ENCODE measurements at regions of chr12 and their contacts with region 1.

Region 1: DNA sequence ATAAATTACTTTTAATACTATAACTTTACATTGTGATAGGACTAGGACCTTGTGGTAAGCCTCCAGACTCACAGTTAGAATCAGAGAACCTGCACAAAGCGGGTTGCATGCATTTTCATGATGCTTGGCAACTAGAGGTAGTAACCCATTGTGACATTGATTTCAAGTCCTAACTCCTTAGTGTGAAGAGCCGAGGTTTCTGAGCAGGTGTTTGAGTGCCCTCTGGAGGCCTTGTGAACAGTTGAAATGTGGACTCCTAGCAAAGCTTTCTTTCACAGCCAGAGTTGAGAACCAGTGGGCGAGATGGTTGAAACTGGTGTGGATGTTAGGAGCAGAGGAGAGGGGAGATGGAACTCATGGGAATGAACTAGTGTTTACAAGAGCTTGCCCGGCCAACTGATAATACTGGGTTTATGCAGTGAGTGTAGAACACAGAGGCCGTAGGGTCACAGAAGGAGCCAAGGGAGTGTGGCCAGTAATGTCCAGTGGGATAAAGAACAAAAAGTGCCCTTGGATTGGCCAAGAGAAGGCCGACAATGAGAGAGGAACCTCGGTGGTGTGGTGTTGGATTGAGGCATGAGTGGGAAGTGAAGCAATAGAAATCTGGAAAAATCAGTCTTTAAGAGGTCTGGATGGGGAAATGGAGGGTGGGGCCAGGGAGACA is 10.9 kb downstream of the ZNF664 start:
- DNase-seq: peak in 8 of 9 experiments; percentile 23 to 80 (median 54)
- ATAC-seq: peak; percentile 75
- H3K4me3 ChIP-seq: no peak overlapping the region
- H3K4me3 Mint-ChIP-seq: no peak overlapping the region
- H3K27ac ChIP-seq: no peak overlapping the region
- H3K27ac Mint-ChIP-seq: no peak overlapping the region
- H3K4me1 ChIP-seq: no peaks in the 10 kb centered on the region
- H3K4me1 Mint-ChIP-seq: peaks cover 17% of the 10 kb centered on the region
- H3K27me3 ChIP-seq: no peaks in the 10 kb centered on the region
- H3K27me3 Mint-ChIP-seq: no peaks in the 10 kb centered on the region
- CTCF ChIP-seq: peak; percentile 73

Region 2: GRCh38 chr12:123713398-123713797 is 270.6 kb before region 1 on chr12:
- CTCF ChIA-PET with region 1: interaction called, 3 read pairs
- POLR2A ChIA-PET with region 1: no interaction called
- intact Hi-C with region 1: loop called in 1 of 2 experiments (anchors 5 kb)
- DNase-seq: peak in 1 of 9 experiments; percentile 21
- ATAC-seq: no peak
- H3K4me3 ChIP-seq: peak overlapping the region; percentile 69 to 98
- H3K4me3 Mint-ChIP-seq: peak overlapping the region; percentile 84
- H3K27ac ChIP-seq: no peak overlapping the region
- H3K27ac Mint-ChIP-seq: peak overlapping the region; percentile 86
- H3K4me1 ChIP-seq: peaks cover 22% of the 10 kb centered on the region
- H3K4me1 Mint-ChIP-seq: peaks cover 45% of the 10 kb centered on the region
- H3K27me3 ChIP-seq: no peaks in the 10 kb centered on the region
- H3K27me3 Mint-ChIP-seq: no peaks in the 10 kb centered on the region
- CTCF ChIP-seq: no peak

Region 3: GRCh38 chr12:123801573-123802178 is 182.3 kb before region 1 on chr12:
- CTCF ChIA-PET with region 1: interaction called, 3 read pairs
- POLR2A ChIA-PET with region 1: no interaction called
- intact Hi-C with region 1: loop called (anchors 1 to 5 kb)
- DNase-seq: peak in 2 of 9 experiments; percentile 8 to 15
- ATAC-seq: no peak
- H3K4me3 ChIP-seq: no peak overlapping the region
- H3K4me3 Mint-ChIP-seq: no peak overlapping the region
- H3K27ac ChIP-seq: no peak overlapping the region
- H3K27ac Mint-ChIP-seq: no peak overlapping the region
- H3K4me1 ChIP-seq: no peaks in the 10 kb centered on the region
- H3K4me1 Mint-ChIP-seq: no peaks in the 10 kb centered on the region
- H3K27me3 ChIP-seq: no peaks in the 10 kb centered on the region
- H3K27me3 Mint-ChIP-seq: no peaks in the 10 kb centered on the region
- CTCF ChIP-seq: peak; percentile 22

Region 4: DNA sequence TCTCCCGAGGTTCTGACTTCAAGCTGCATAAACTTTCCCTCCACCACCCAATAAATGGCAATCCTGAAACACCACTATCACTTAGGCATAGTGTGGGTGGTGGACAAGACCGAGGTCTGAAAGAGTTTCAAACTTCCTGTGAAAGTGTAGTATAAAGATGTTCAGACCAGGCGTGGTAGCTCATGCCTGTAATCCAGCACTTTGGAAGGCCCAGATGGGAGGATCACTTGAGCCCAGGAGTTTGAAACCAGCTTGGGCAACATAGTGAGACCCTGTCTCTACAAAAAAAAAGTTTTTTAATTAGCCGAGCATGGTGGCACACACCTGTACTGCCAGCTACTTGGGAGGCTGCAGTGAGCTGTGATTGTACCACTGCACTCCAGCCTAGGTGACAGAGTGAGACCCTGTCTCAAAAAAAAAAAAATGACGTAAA is 73.2 kb before region 1 on chr12:
- CTCF ChIA-PET with region 1: interaction called, 160 read pairs
- POLR2A ChIA-PET with region 1: interaction called, 3 read pairs
- intact Hi-C with region 1: loop called (anchors 1 kb)
- DNase-seq: no peak
- ATAC-seq: peak; percentile 26
- H3K4me3 ChIP-seq: no peak overlapping the region
- H3K4me3 Mint-ChIP-seq: no peak overlapping the region
- H3K27ac ChIP-seq: no peak overlapping the region
- H3K27ac Mint-ChIP-seq: peak overlapping the region; percentile 16
- H3K4me1 ChIP-seq: no peaks in the 10 kb centered on the region
- H3K4me1 Mint-ChIP-seq: peaks cover 8% of the 10 kb centered on the region
- H3K27me3 ChIP-seq: no peaks in the 10 kb centered on the region
- H3K27me3 Mint-ChIP-seq: no peaks in the 10 kb centered on the region
- CTCF ChIP-seq: no peak

Region 5: DNA sequence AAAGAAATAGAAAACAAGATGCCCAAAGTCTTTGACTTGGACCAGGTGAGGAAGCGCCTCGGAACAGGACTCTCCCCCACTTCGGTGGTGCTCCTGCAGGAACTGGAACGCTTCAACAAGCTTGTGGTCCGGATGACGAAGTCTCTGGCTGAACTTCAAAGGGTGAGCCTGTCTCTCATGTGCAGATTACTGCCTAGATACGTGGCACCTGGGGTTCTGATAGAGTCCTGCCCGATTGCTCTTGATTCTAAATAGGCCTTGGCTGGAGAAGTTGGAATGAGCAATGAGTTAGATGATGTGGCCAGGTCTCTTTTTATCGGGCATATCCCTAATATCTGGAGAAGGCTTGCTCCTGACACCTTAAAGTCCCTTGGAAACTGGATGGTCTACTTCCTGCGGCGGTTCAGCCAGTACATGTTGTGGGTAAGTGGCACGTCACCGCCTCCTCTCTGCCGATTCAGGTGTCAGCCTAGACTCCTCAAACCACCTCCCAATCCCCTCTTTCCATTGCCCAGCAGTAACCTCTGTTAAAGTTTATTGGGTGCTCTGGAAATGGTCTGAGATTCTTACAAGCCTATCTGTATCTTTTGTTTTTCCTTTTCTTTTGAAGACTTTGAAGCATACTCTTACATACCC is 52.1 kb before region 1 on chr12:
- CTCF ChIA-PET with region 1: interaction called, 11 read pairs
- POLR2A ChIA-PET with region 1: no interaction called
- intact Hi-C with region 1: no loop called
- DNase-seq: peak in 8 of 9 experiments; percentile 20 to 80 (median 60)
- ATAC-seq: peak; percentile 77
- H3K4me3 ChIP-seq: peak overlapping the region in 1 of 2 experiments; percentile 12
- H3K4me3 Mint-ChIP-seq: peak overlapping the region; percentile 59
- H3K27ac ChIP-seq: no peak overlapping the region
- H3K27ac Mint-ChIP-seq: peak overlapping the region; percentile 9
- H3K4me1 ChIP-seq: peaks cover 29% of the 10 kb centered on the region
- H3K4me1 Mint-ChIP-seq: peaks cover 34% of the 10 kb centered on the region
- H3K27me3 ChIP-seq: no peaks in the 10 kb centered on the region
- H3K27me3 Mint-ChIP-seq: no peaks in the 10 kb centered on the region
- CTCF ChIP-seq: no peak

Region 6: DNA sequence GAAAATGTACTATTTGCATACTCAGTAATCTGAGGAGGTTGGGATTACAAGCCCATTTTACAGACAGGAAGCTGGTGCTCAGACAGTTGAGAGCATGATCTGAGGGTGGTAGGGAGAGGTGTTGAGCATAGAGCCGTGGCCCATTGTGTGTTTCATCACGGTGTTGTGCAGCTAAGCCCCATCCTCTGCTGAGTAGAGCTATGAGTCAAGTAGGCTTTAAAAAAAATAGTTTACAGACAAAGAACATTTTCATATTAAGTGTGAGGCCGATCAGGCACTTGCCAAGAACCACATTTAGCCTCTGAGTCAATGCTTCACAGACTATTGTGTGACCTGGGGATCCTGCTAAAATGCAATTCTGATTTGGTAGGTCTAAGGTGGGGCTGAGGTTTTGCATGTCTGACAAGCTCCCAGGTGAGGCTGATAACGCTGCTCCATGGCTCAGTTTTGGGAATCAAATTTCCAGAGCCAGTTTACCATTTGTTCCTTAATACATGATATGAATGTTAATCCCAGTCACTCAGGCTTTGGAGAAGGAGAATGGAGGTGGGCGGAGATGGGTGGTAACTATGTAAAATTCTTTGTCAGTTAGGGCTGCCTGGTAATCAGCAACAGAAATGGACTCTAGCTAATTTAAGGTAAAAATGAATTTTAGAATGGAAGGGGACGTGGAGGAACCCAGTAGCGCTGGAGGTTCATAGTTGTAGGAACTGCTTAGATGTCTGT is 11.2 kb after region 1 on chr12:
- CTCF ChIA-PET with region 1: interaction called, 11 read pairs
- POLR2A ChIA-PET with region 1: no interaction called
- intact Hi-C with region 1: no loop called
- DNase-seq: peak in 1 of 9 experiments; percentile 8
- ATAC-seq: no peak
- H3K4me3 ChIP-seq: no peak overlapping the region
- H3K4me3 Mint-ChIP-seq: no peak overlapping the region
- H3K27ac ChIP-seq: no peak overlapping the region
- H3K27ac Mint-ChIP-seq: no peak overlapping the region
- H3K4me1 ChIP-seq: no peaks in the 10 kb centered on the region
- H3K4me1 Mint-ChIP-seq: peaks cover 39% of the 10 kb centered on the region
- H3K27me3 ChIP-seq: no peaks in the 10 kb centered on the region
- H3K27me3 Mint-ChIP-seq: no peaks in the 10 kb centered on the region
- CTCF ChIP-seq: no peak

Measured in CD8-positive, alpha-beta T cell (primary cell).